CD4-positive, alpha-beta memory T cell (primary cell): ENCODE measurements at regions of chr15 and their contacts with region 1.

Region 1: DNA sequence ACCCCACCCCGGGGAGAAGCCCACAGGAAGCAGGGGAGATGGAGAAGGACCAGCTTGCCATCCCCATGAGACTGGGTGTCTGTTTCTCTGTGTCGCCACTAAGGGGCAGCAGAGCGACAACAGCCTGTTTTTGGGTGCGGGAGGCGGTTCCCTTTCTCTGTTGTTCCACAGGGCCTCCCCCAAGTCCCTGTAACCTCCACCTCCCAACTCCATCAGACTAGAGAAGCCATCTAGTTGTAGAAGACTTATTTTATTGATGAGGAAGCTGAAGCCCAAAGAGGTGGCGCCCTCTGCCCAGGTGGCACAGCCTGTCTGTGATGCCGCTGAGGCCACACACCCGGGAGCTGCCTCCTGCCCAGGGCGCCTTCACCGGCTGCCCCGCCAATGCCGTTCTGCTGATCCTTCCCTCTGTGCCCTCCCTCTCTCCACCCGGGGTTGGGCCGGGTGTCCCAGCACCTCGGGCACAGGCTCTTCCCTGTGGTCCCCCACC is 3.9 kb upstream of the CCDC9B start:
- DNase-seq: peak; percentile 68 to 71 (median 68)
- H3K4me3 ChIP-seq: no peak overlapping the region
- H3K4me3 Mint-ChIP-seq: no peak overlapping the region
- H3K27ac ChIP-seq: no peak overlapping the region
- H3K27ac Mint-ChIP-seq: no peak overlapping the region
- H3K4me1 ChIP-seq: peaks cover 7% of the 10 kb centered on the region
- H3K4me1 Mint-ChIP-seq: peaks cover 0 to 3% (median under 1%) of the 10 kb centered on the region in 4 donors
- H3K27me3 ChIP-seq: no peaks in the 10 kb centered on the region
- H3K27me3 Mint-ChIP-seq: no peaks in the 10 kb centered on the region

Region 2: GRCh38 chr15:40372981-40373380 is 28.3 kb after region 1 on chr15:
- CTCF ChIA-PET with region 1: interaction called, 10 read pairs
- POLR2A ChIA-PET with region 1: interaction called, 4 read pairs
- intact Hi-C with region 1: loop called (anchors 1 kb)
- DNase-seq: no peak
- H3K4me3 ChIP-seq: no peak overlapping the region
- H3K4me3 Mint-ChIP-seq: no peak overlapping the region
- H3K27ac ChIP-seq: no peak overlapping the region
- H3K27ac Mint-ChIP-seq: no peak overlapping the region
- H3K4me1 ChIP-seq: peaks cover 3% of the 10 kb centered on the region
- H3K4me1 Mint-ChIP-seq: peaks cover 0 to 7% (median 2%) of the 10 kb centered on the region in 4 donors
- H3K27me3 ChIP-seq: no peaks in the 10 kb centered on the region
- H3K27me3 Mint-ChIP-seq: no peaks in the 10 kb centered on the region

Region 3: GRCh38 chr15:40398413-40398873 is 53.8 kb after region 1 on chr15:
- CTCF ChIA-PET with region 1: interaction called, 15 read pairs
- POLR2A ChIA-PET with region 1: no interaction called
- intact Hi-C with region 1: no loop called
- DNase-seq: no peak
- H3K4me3 ChIP-seq: peak overlapping the region in 1 of 2 donors; percentile 5
- H3K4me3 Mint-ChIP-seq: peak overlapping the region; percentile 37 to 83 (median 66)
- H3K27ac ChIP-seq: no peak overlapping the region
- H3K27ac Mint-ChIP-seq: peak overlapping the region in 6 of 7 donors; percentile 5 to 88 (median 50)
- H3K4me1 ChIP-seq: peaks cover 14% of the 10 kb centered on the region
- H3K4me1 Mint-ChIP-seq: peaks cover 9 to 26% (median 14%) of the 10 kb centered on the region in 4 donors
- H3K27me3 ChIP-seq: no peaks in the 10 kb centered on the region
- H3K27me3 Mint-ChIP-seq: no peaks in the 10 kb centered on the region

Region 4: GRCh38 chr15:40421246-40422157 is 76.8 kb after region 1 on chr15:
- CTCF ChIA-PET with region 1: interaction called, 235 read pairs
- POLR2A ChIA-PET with region 1: interaction called, 10 read pairs
- intact Hi-C with region 1: loop called (anchors 1 kb)
- DNase-seq: peak; percentile 73 to 77 (median 74)
- H3K4me3 ChIP-seq: no peak overlapping the region
- H3K4me3 Mint-ChIP-seq: no peak overlapping the region
- H3K27ac ChIP-seq: no peak overlapping the region
- H3K27ac Mint-ChIP-seq: peak overlapping the region in 1 of 7 donors; percentile 40
- H3K4me1 ChIP-seq: peaks cover 8% of the 10 kb centered on the region
- H3K4me1 Mint-ChIP-seq: peaks cover 0 to 5% (median 0%) of the 10 kb centered on the region in 4 donors
- H3K27me3 ChIP-seq: no peaks in the 10 kb centered on the region
- H3K27me3 Mint-ChIP-seq: no peaks in the 10 kb centered on the region